Naive thymus-derived CD4-positive, alpha-beta T cell (primary cell): ENCODE measurements at regions of chr6 and their contacts with region 1.

Region 1: DNA sequence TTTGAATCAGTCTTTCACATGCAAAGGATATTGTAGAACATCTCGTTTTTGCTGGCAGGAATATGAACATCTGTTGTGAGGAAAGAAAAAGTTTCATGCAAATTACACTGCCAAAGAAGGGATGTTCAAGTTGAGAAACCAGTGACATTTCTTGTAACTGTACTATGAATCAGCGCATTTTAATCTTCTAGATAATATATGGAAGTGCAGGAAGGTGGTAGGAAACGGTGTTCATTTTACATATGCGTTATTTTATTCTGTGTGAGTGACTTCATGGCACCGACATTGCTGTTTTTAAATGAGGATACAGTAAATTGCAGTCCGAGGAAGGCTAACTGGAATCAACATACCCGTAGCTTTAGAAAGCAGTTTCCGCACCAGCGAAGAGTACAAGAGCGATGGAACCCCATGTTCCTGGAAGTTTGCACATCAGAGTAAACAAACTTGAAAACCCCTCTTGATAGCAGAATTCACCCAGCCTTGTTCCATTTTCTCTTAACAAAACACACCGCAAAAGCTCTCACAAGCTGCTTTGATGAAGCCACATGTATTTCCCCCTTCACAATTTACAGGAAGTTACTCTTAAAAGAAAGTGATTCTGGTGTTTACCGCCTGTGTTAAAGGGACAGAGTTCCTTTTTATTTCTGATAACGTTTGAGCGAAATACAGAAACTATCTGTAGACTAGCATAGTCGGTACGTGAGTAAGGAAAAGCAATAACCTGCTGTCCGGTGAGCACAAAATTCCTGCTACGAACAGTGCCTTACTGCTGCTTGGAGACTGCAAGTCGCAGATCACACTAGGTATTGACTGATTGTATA is 11.5 kb downstream of the PRDM1 start:
- DNase-seq: peak in 8 of 9 donors; percentile 60 to 95 (median 90)
- ATAC-seq: peak; percentile 79
- H3K4me3 ChIP-seq: peak overlapping the region; percentile 60
- H3K4me3 Mint-ChIP-seq: peak overlapping the region; percentile 87 to 99 (median 93)
- H3K27ac ChIP-seq: peak overlapping the region; percentile 74
- H3K27ac Mint-ChIP-seq: peak overlapping the region; percentile 93 to 100 (median 97)
- H3K4me1 ChIP-seq: peaks cover 35 to 39% of the 10 kb centered on the region in 2 donors
- H3K4me1 Mint-ChIP-seq: peaks cover 33 to 96% (median 92%) of the 10 kb centered on the region in 7 donors
- H3K27me3 ChIP-seq: no peaks in the 10 kb centered on the region
- H3K27me3 Mint-ChIP-seq: no peaks in the 10 kb centered on the region

Region 2: GRCh38 chr6:105591053-105591452 is 506.6 kb before region 1 on chr6:
- CTCF ChIA-PET with region 1: no interaction called
- POLR2A ChIA-PET with region 1: no interaction called
- intact Hi-C with region 1: no loop called
- DNase-seq: no peak
- ATAC-seq: peak; percentile 77
- H3K4me3 ChIP-seq: no peak overlapping the region
- H3K4me3 Mint-ChIP-seq: peak overlapping the region in 1 of 10 donors; percentile 46
- H3K27ac ChIP-seq: no peak overlapping the region
- H3K27ac Mint-ChIP-seq: peak overlapping the region in 1 of 9 donors; percentile 61
- H3K4me1 ChIP-seq: peaks cover 0 to 8% of the 10 kb centered on the region in 2 donors
- H3K4me1 Mint-ChIP-seq: peaks cover 10 to 75% (median 28%) of the 10 kb centered on the region in 7 donors
- H3K27me3 ChIP-seq: no peaks in the 10 kb centered on the region
- H3K27me3 Mint-ChIP-seq: peaks cover 0 to 6% (median 0%) of the 10 kb centered on the region in 5 donors

Region 3: DNA sequence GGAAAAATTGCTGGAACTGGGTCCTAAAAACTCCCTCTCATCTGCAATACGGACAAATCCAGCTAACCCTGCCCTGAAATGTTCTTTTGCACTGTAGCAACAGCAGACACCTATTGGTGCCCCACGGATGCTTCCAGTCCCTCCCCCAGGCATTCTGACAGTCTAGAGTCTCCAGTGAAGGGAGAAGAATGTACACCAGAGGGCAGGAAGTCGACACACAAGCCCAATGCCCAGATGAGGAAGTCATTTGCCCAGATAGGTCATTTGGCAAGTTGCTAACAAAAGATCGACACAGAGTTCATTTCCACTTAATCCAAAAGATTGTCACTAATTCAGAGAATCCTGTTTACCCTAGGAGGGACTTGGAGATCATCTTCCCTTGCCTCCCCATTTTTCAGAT is 304.5 kb before region 1 on chr6:
- CTCF ChIA-PET with region 1: no interaction called
- POLR2A ChIA-PET with region 1: no interaction called
- intact Hi-C with region 1: loop called in 1 of 2 experiments (anchors 5 kb)
- DNase-seq: peak in 3 of 9 donors; percentile 9 to 23 (median 15)
- ATAC-seq: peak; percentile 76
- H3K4me3 ChIP-seq: no peak overlapping the region
- H3K4me3 Mint-ChIP-seq: peak overlapping the region in 1 of 10 donors; percentile 28
- H3K27ac ChIP-seq: no peak overlapping the region
- H3K27ac Mint-ChIP-seq: peak overlapping the region in 1 of 9 donors; percentile 68
- H3K4me1 ChIP-seq: peaks cover 0 to 3% of the 10 kb centered on the region in 2 donors
- H3K4me1 Mint-ChIP-seq: peaks cover 6 to 79% (median 12%) of the 10 kb centered on the region in 7 donors
- H3K27me3 ChIP-seq: no peaks in the 10 kb centered on the region
- H3K27me3 Mint-ChIP-seq: peaks cover 0 to under 1% (median 0%) of the 10 kb centered on the region in 5 donors

Region 4: DNA sequence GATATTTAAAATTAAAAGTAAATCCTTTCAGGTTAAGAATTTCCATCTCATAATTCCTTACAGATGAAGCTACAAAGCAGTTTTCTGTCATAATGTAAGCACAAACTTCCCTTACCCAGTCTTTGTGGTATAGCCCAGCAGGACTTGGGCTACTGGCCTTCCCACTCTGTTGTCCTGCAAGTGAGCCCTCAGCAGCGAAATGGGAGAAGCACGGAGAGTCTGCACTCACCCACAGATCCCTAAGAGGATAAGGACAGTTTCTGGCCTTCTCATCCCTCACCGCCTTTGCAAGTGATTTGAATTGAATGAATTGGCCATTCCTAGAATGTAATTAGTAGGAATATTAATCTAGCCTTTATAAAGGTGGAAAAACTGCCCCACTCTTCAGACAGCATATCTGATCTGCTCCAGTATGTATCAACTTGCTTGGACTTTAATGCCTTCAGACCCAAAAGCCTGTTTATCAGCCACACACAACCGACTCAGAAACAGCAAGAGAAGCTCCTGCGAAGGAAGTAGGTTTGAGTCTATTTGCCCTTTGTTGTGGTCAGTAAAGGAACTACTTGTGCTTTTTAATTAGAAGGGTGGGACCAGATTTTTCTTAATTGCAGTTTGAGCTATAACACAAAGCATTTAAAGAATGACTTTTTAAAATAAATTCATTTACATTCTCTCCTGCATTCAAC is 41.4 kb before region 1 on chr6:
- CTCF ChIA-PET with region 1: no interaction called
- POLR2A ChIA-PET with region 1: no interaction called
- intact Hi-C with region 1: loop called in 1 of 2 experiments (anchors 1 kb)
- DNase-seq: peak in 7 of 9 donors; percentile 22 to 69 (median 50)
- ATAC-seq: peak; percentile 68
- H3K4me3 ChIP-seq: peak overlapping the region; percentile 26
- H3K4me3 Mint-ChIP-seq: peak overlapping the region; percentile 1 to 80 (median 58)
- H3K27ac ChIP-seq: no peak overlapping the region
- H3K27ac Mint-ChIP-seq: peak overlapping the region in 4 of 9 donors; percentile 1 to 49 (median 2)
- H3K4me1 ChIP-seq: peaks cover 19 to 22% of the 10 kb centered on the region in 2 donors
- H3K4me1 Mint-ChIP-seq: peaks cover 6 to 32% (median 29%) of the 10 kb centered on the region in 7 donors
- H3K27me3 ChIP-seq: no peaks in the 10 kb centered on the region
- H3K27me3 Mint-ChIP-seq: peaks cover 0 to 11% (median 0%) of the 10 kb centered on the region in 5 donors

Region 5: DNA sequence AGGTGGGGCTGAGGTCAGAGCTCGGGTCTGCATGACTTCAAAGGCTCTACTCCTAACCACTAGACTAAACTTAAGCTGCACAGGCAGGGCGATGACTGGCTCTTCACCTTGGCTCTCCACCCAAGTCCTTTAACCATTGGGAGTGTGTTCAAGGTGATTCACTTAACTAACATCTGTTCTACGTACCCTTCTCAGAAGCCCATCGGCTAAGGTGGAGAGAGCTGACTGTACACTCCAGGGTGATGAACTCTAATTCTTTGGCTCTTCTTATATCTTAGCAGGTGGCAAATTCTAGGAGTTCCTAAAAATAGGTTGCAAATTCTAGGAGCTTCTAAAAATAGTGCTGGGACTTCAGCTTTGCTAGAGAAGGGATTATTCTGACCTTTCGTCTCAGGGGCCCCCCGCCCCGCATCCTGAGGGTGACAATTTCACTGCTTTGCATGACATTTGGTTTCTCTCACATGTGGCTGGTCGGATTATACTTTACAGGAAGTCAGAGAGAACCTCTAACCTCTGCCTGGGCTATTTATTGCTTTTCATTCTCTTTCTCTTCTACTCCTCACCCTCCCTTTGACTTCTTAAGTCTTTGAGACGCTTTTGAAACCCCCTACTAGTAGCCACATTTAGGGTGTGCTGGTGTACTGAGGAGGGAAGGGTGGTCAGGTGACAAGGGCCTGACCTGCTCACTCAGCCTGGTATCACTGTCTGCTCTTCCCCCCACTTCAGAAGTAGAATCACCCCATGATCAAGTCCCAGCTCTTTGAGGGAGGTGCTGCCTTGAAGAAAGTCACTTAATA is 44.0 kb after region 1 on chr6:
- CTCF ChIA-PET with region 1: no interaction called
- POLR2A ChIA-PET with region 1: interaction called, 3 read pairs
- intact Hi-C with region 1: loop called in 1 of 2 experiments (anchors 1 kb)
- DNase-seq: peak in 4 of 9 donors; percentile 28 to 46 (median 30)
- ATAC-seq: peak; percentile 77
- H3K4me3 ChIP-seq: peak overlapping the region; percentile 11
- H3K4me3 Mint-ChIP-seq: peak overlapping the region; percentile 47 to 83 (median 69)
- H3K27ac ChIP-seq: peak overlapping the region; percentile 36
- H3K27ac Mint-ChIP-seq: peak overlapping the region; percentile 6 to 91 (median 67)
- H3K4me1 ChIP-seq: peaks cover 23 to 35% of the 10 kb centered on the region in 2 donors
- H3K4me1 Mint-ChIP-seq: peaks cover 17 to 60% (median 33%) of the 10 kb centered on the region in 7 donors
- H3K27me3 ChIP-seq: no peaks in the 10 kb centered on the region
- H3K27me3 Mint-ChIP-seq: no peaks in the 10 kb centered on the region

Region 6: GRCh38 chr6:106194949-106195921 is 97.6 kb after region 1 on chr6:
- CTCF ChIA-PET with region 1: no interaction called
- POLR2A ChIA-PET with region 1: interaction called, 3 read pairs
- intact Hi-C with region 1: loop called (anchors 1 kb)
- DNase-seq: peak in 7 of 9 donors; percentile 43 to 70 (median 57)
- ATAC-seq: peak; percentile 81
- H3K4me3 ChIP-seq: peak overlapping the region; percentile 21
- H3K4me3 Mint-ChIP-seq: peak overlapping the region; percentile 19 to 80 (median 71)
- H3K27ac ChIP-seq: peak overlapping the region; percentile 30
- H3K27ac Mint-ChIP-seq: peak overlapping the region; percentile 64 to 91 (median 84)
- H3K4me1 ChIP-seq: peaks cover 30 to 36% of the 10 kb centered on the region in 2 donors
- H3K4me1 Mint-ChIP-seq: peaks cover 24 to 54% (median 41%) of the 10 kb centered on the region in 7 donors
- H3K27me3 ChIP-seq: no peaks in the 10 kb centered on the region
- H3K27me3 Mint-ChIP-seq: no peaks in the 10 kb centered on the region

Region 7: DNA sequence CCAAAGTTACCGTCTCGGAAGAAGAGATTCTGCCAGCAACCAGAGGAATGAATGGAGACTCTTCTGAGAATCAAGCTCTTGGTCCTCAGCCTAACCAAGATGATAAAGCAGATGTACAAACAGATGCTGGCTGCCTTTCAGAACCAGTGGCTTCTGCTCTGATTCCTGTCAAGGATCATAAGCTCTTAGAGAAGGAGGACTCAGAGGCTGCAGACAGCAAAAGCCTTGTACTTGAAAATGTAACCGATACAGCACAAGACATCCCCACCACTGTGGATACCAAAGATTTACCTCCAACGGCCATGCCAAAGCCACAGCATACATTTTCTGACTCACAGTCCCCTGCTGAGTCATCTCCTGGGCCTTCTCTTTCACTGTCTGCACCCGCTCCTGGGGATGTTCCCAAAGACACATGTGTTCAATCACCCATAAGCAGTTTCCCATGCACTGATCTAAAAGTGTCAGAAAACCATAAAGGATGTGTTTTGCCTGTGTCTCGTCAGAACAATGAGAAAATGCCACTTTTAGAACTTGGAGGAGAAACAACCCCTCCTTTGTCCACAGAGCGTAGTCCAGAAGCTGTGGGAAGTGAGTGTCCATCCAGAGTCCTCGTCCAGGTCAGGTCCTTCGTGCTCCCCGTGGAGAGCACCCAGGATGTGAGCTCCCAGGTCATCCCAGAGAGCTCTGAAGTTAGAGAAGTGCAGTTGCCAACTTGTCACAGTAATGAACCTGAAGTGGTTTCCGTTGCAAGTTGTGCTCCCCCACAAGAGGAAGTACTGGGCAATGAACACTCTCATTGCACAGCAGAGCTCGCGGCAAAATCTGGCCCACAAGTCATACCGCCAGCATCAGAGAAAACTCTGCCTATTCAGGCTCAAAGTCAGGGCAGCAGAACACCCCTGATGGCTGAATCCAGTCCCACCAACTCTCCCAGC is 422.1 kb after region 1 on chr6:
- CTCF ChIA-PET with region 1: no interaction called
- POLR2A ChIA-PET with region 1: no interaction called
- intact Hi-C with region 1: loop called (anchors 1 to 2 kb)
- DNase-seq: peak; percentile 38 to 80 (median 72)
- ATAC-seq: peak; percentile 68
- H3K4me3 ChIP-seq: peak overlapping the region; percentile 69
- H3K4me3 Mint-ChIP-seq: peak overlapping the region; percentile 82 to 96 (median 93)
- H3K27ac ChIP-seq: peak overlapping the region; percentile 86
- H3K27ac Mint-ChIP-seq: peak overlapping the region; percentile 92 to 99 (median 95)
- H3K4me1 ChIP-seq: peaks cover 42 to 47% of the 10 kb centered on the region in 2 donors
- H3K4me1 Mint-ChIP-seq: peaks cover 36 to 87% (median 71%) of the 10 kb centered on the region in 7 donors
- H3K27me3 ChIP-seq: no peaks in the 10 kb centered on the region
- H3K27me3 Mint-ChIP-seq: no peaks in the 10 kb centered on the region